Activated naive CD4-positive, alpha-beta T cell treated with anti-CD3 and anti-CD28 coated beads for 36 hours (primary cell): ENCODE measurements at regions of chr1 and their contacts with region 1.

Region 1: GRCh38 chr1:52636721-52637695 is 4.0 kb downstream of the SHISAL2A start:
- DNase-seq: peak; percentile 84
- H3K4me3 Mint-ChIP-seq: peak overlapping the region; percentile 73
- H3K27ac Mint-ChIP-seq: peak overlapping the region; percentile 98
- H3K4me1 Mint-ChIP-seq: peaks cover 79% of the 10 kb centered on the region
- H3K27me3 Mint-ChIP-seq: no peaks in the 10 kb centered on the region

Region 2: DNA sequence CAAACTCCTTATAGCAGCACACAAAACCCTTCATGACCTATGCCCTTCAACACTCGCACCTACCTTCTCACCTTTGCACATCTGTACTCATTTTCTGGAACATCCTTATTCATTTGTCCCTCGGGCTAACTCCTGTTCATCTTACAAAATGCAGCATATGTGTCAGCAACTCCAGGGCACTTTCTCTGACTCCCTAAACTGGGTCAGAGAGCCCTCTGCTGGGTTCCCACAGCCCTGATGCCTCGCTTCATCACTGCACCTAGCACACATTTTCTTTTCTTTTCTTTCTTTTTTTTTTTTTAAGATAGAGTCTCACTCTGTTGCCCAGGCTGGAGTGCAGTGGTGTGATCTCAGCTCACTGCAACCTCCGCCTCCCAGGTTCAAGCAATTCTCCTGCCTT is 700.5 kb before region 1 on chr1:
- CTCF ChIA-PET with region 1: no interaction called
- intact Hi-C with region 1: no loop called
- DNase-seq: no peak
- H3K4me3 Mint-ChIP-seq: no peak overlapping the region
- H3K27ac Mint-ChIP-seq: no peak overlapping the region
- H3K4me1 Mint-ChIP-seq: no peaks in the 10 kb centered on the region
- H3K27me3 Mint-ChIP-seq: peaks cover 1% of the 10 kb centered on the region

Region 3: GRCh38 chr1:52424231-52424636 is 212.8 kb before region 1 on chr1:
- CTCF ChIA-PET with region 1: no interaction called
- intact Hi-C with region 1: loop called (anchors 2 kb)
- DNase-seq: peak; percentile 34
- H3K4me3 Mint-ChIP-seq: peak overlapping the region; percentile 57
- H3K27ac Mint-ChIP-seq: peak overlapping the region; percentile 83
- H3K4me1 Mint-ChIP-seq: peaks cover 51% of the 10 kb centered on the region
- H3K27me3 Mint-ChIP-seq: no peaks in the 10 kb centered on the region

Region 4: DNA sequence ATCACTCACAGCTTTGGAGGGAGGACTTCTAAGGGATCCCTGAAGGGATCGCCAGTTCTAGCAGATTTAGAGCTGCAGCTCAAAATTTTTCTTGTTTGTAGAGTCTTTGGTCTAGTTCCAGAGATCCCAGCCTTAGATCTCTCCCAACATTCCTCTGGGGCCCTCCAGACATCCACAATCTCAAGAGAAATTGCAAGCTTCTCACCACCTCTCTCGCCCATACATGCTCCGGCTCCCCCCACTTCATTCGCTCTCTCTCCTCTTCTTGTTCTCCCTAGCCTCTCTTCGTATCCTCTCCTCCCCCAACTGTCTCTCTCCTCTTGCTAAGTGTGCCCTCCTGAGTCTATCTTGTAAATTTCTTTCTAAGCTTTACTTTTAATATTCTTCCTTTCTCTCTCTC is 69.1 kb before region 1 on chr1:
- CTCF ChIA-PET with region 1: no interaction called
- intact Hi-C with region 1: no loop called
- DNase-seq: no peak
- H3K4me3 Mint-ChIP-seq: no peak overlapping the region
- H3K27ac Mint-ChIP-seq: no peak overlapping the region
- H3K4me1 Mint-ChIP-seq: peaks cover 17% of the 10 kb centered on the region
- H3K27me3 Mint-ChIP-seq: no peaks in the 10 kb centered on the region

Region 5: GRCh38 chr1:52601991-52602855 is 34.8 kb before region 1 on chr1 and contains the start of gene GPX7:
- CTCF ChIA-PET with region 1: interaction called, 4 read pairs
- intact Hi-C with region 1: loop called (anchors 1 kb)
- DNase-seq: peak; percentile 59
- H3K4me3 Mint-ChIP-seq: peak within 1 kb of the TSS; percentile 90
- H3K27ac Mint-ChIP-seq: peak within 1 kb of the TSS; percentile 91
- H3K4me1 Mint-ChIP-seq: peaks cover 38% of the 10 kb centered on the region
- H3K27me3 Mint-ChIP-seq: no peaks in the 10 kb centered on the region
- total RNA-seq, gene GPX7: 20.4 to 20.6 TPM